ENCODE measurements at regions of chr13 and their contacts with region 1.

Region 1: DNA sequence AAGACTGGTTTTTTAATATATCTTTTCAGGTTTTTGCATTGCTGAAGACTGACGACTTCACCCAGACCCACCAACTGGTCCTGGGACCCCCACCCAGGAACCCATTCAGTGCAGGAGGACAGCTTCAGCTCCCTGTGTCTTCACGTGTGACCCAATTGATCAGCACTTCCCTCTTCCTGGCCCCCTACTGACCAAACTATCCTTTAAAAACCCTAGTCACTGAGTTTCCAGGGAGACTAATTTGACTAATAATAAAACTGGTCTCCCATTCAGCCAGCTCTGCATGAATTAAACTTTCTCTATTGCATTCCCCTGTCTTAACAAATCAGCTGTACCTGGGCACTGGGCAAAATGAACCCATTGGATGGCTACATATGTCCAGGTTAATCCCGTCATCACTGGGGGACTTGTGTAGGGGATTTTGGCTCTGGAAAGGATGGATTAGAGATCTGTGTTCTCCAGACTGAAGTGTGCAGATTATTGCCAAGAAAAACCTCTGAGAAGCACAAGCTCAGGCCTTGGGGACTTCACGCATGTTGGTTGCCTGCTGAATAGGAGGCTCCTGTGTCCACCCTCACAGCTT is 16.3 kb upstream of the PARP4 start:
- DNase-seq: no peak
- H3K4me3 ChIP-seq: peak overlapping the region in 1 of 4 experiments; percentile 10; a peak in 2 of 8 replicates
- H3K27ac ChIP-seq: 0 out of 2 replicates have a peak overlapping the region, but pooled peaks have one; percentile 23
- H3K4me1 ChIP-seq: peaks cover 2 to 13% (median 11%) of the 10 kb centered on the region in 4 experiments; a peak in 6 of 7 replicates
- H3K27me3 ChIP-seq: no peaks in the 10 kb centered on the region
- CTCF ChIP-seq: no peak
- EP300 ChIP-seq: no peak
- POLR2A ChIP-seq: no peak; a peak in 1 of 3 replicates
- RAD21 ChIP-seq: no peak

Region 2: DNA sequence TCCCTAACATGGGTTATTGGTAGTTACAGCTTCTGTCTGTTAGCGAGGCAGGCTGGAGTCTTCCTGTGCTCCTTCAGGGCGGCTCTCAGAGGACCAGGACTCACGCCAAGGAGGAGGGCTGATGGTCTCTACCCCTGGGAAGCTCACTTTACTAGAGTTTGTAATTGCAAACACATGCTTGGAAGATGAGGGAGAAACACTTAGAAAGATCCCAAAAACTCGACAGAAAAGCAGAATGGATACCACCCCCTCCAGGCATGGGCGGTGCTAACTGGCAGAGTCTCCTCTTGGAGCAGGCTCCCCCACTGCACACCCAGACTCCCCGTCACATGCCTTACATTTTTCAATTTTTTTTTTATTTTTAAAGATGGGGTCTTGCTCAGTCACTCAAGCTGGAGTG is 78.4 kb before region 1 on chr13:
- CTCF ChIA-PET with region 1: no interaction called
- POLR2A ChIA-PET with region 1: no interaction called
- DNase-seq: no peak
- H3K4me3 ChIP-seq: no peak overlapping the region
- H3K27ac ChIP-seq: no peak overlapping the region
- H3K4me1 ChIP-seq: no peaks in the 10 kb centered on the region
- H3K27me3 ChIP-seq: no peaks in the 10 kb centered on the region
- CTCF ChIP-seq: no peak
- EP300 ChIP-seq: no peak
- POLR2A ChIP-seq: no peak
- RAD21 ChIP-seq: no peak

Region 3: DNA sequence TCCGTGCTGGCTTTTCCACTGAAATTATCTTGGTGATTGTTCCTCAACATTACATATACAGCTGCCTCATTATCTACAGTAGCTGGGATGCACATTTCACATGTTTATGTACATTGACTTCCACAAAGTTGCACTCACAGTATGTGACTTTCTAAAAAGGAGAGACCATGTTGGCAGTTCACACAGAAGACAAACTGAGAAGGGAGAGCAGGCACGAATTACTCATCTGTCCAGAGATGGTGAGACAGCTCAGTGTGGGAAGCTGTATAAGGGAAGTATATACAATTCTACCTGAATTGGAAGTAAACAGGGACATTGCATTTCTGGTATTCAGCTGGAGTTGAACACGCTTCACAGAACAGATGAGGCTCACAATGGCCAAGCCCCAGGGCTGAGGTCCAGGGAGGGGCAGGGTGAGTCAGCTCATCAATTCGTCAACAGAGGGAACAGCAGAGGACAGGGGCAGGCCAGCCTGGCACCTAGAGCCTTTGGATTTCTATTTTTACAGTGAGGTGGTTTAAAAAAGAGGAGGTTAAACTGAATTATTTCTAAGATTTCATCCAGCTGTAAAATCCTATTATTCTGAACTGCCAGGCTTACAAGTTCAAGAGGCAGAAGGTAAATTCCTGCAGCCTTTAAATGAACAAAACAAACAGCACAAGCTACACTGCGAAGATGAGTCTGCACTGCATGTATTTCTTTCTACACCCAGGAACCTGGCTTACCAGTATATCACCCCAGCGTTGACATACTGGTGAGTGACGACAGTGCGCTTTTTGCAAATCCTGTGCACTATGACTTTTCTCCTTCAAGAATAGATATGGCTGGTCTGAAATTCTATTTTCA is 26.2 kb before region 1 on chr13:
- CTCF ChIA-PET with region 1: no interaction called
- POLR2A ChIA-PET with region 1: no interaction called
- DNase-seq: no peak
- H3K4me3 ChIP-seq: no peak overlapping the region
- H3K27ac ChIP-seq: no peak overlapping the region
- H3K4me1 ChIP-seq: no peaks in the 10 kb centered on the region; a peak in 1 of 7 replicates
- H3K27me3 ChIP-seq: no peaks in the 10 kb centered on the region
- CTCF ChIP-seq: no peak
- EP300 ChIP-seq: no peak
- POLR2A ChIP-seq: no peak
- RAD21 ChIP-seq: no peak

Region 4: DNA sequence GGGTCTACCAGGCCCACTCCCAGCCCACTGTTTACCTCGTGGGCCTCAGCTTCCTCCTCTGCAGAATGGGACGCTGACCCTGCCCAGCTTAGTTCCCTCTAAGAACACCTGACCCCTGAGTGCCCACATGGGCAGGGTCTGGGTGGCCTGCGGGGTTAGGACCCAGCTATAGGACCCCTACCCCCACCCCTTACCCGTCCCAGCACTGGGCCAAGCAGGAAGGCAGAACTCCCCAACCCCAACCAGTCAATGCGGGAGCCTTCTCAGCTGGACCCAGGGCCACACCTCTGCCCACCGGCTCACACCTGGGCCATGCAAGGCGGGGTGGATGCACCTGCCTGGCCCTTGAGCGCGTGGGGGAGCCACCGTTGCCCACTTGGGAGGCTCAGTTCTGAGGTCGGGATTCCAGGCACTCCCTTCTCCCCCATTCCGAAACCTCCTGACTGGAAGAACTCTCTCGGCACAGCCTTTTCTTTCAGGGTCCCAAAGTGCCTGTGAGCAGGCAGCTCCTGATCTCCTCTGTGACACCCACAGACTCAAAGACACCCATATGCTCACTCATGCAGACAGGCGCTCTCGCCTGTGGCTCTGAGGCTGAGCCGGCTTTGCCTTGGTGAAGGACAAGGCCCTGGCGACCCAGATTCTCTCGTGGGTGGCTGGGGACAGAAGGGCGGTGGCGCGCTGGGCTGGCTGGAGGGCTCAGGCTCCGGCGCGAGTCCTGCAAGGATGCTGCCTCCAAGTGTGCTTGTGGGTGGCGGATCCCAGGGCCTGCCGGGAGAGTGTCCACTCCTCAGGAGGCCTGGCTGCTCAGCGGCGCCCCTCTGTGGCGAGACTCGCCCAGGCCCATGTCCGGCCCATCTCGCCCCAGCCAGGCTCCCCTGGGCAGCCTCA is 11.6 kb after region 1 on chr13:
- CTCF ChIA-PET with region 1: interaction called, 11 read pairs
- POLR2A ChIA-PET with region 1: interaction called, 3 read pairs
- DNase-seq: peak; percentile 54 to 95
- H3K4me3 ChIP-seq: peak overlapping the region in 3 of 4 experiments; percentile 42 to 63 (median 49); a peak in 4 of 8 replicates
- H3K27ac ChIP-seq: no peak overlapping the region
- H3K4me1 ChIP-seq: peaks cover 0 to 11% (median 0%) of the 10 kb centered on the region in 4 experiments; a peak in 1 of 7 replicates
- H3K27me3 ChIP-seq: peaks cover 2 to 10% (median 9%) of the 10 kb centered on the region in 4 experiments
- CTCF ChIP-seq: peak; percentile 82 to 88 (median 84)
- EP300 ChIP-seq: no peak
- POLR2A ChIP-seq: no peak
- RAD21 ChIP-seq: peak; percentile 61 to 74